CD8-positive, alpha-beta T cell (primary cell): ENCODE measurements at regions of chr20 and their contacts with region 1.

Region 1: DNA sequence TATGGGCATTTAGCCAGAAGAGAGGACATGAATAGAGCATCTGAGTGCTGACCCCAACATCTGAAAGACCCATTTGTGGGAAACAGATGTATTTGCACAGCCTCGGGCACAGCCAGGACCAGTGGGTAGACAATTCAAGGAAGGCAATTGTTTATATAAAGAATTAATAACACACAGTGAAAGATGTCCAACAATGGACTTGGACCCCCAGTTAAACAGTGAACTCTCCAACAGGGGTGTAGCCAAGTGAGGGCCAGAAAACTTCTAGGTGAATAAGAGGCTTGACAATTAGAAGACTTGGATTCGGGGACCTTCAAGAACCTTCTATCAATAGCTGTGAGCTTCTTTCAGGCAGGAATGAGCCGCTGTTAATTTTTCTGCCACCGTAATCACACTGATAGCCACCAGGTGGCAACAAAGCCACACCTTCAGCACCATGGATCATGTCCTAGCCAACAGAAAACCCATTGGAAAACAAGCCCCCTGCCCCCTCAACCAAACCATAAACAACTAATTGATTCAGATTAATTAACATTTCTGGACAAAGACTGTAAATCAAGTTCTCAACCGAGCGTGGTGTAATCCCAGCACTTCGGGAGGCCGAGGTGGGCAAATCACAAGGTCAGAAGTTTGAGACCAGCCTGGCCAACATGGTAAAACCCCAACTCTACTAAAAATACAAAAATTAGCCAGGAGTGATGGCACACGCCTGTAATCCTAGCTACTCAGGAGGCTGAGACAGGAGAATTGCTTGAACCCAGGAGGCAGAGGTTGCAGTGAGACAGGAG is 8.8 kb upstream of the SRSF6 start:
- DNase-seq: peak in 8 of 9 experiments; percentile 16 to 67 (median 46)
- ATAC-seq: peak; percentile 80
- H3K4me3 ChIP-seq: no peak overlapping the region
- H3K4me3 Mint-ChIP-seq: no peak overlapping the region
- H3K27ac ChIP-seq: no peak overlapping the region
- H3K27ac Mint-ChIP-seq: no peak overlapping the region
- H3K4me1 ChIP-seq: no peaks in the 10 kb centered on the region
- H3K4me1 Mint-ChIP-seq: peaks cover 4% of the 10 kb centered on the region
- H3K27me3 ChIP-seq: peaks cover 0 to 2% of the 10 kb centered on the region in 2 experiments
- H3K27me3 Mint-ChIP-seq: peaks cover 33% of the 10 kb centered on the region
- CTCF ChIP-seq: peak; percentile 69

Region 2: DNA sequence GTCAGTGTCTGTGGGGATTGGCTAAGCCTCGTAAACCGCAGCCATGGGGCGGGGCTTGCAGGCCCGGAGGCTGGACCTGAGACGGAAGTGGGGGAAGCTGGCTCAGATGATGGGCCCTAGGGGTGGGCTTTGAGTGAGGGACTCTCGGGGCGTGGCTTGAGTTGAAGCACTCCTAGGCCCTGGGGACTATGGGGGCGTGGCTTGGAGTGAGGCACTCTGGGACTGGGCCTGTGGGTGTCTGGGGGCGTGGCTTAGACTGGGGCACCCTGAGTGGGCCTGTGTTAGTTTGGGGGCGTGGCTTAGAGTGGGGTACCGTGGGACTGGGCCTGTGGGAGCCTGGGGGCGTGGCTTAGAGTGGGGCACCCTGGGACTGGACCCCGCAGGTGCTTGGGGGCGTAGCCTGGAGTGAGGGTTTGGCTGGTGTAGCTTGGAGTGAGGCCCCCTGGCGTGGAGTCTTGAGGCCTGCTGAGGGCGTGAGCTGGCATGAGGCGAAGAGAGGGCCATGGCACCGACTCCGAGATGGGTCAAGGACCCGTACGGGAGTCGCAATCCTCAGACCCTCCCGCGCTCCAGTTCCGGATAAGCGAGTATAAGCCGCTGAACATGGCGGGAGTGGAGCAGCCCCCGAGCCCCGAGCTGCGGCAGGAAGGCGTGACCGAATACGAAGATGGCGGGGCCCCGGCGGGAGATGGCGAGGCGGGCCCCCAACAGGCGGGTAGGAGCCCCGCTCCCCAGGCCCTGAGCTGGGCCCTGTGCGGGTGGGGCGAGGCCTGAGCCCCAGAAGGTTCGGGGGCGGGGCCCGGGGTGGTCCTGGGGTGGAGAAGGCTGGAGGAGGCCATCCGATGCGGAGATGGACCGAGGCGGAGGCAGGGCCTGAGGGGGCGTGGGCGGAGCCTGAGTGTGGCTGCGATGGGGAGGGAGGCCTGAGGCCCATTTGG is 65.4 kb after region 1 on chr20:
- CTCF ChIA-PET with region 1: interaction called, 6 read pairs
- POLR2A ChIA-PET with region 1: no interaction called
- intact Hi-C with region 1: loop called in 1 of 2 experiments (anchors 2 kb)
- DNase-seq: peak; percentile 74 to 97 (median 89)
- ATAC-seq: peak; percentile 92
- H3K4me3 ChIP-seq: peak overlapping the region; percentile 65 to 72
- H3K4me3 Mint-ChIP-seq: peak overlapping the region; percentile 90
- H3K27ac ChIP-seq: peak overlapping the region; percentile 33 to 50
- H3K27ac Mint-ChIP-seq: peak overlapping the region; percentile 86
- H3K4me1 ChIP-seq: peaks cover 12% of the 10 kb centered on the region
- H3K4me1 Mint-ChIP-seq: peaks cover 20% of the 10 kb centered on the region
- H3K27me3 ChIP-seq: no peaks in the 10 kb centered on the region
- H3K27me3 Mint-ChIP-seq: peaks cover 3% of the 10 kb centered on the region
- CTCF ChIP-seq: no peak

Region 3: GRCh38 chr20:43691928-43692524 is 243.1 kb after region 1 on chr20:
- CTCF ChIA-PET with region 1: interaction called, 19 read pairs
- POLR2A ChIA-PET with region 1: no interaction called
- intact Hi-C with region 1: loop called (anchors 2 kb)
- DNase-seq: peak; percentile 19 to 61 (median 54)
- ATAC-seq: peak; percentile 54
- H3K4me3 ChIP-seq: no peak overlapping the region
- H3K4me3 Mint-ChIP-seq: no peak overlapping the region
- H3K27ac ChIP-seq: no peak overlapping the region
- H3K27ac Mint-ChIP-seq: no peak overlapping the region
- H3K4me1 ChIP-seq: no peaks in the 10 kb centered on the region
- H3K4me1 Mint-ChIP-seq: peaks cover 3% of the 10 kb centered on the region
- H3K27me3 ChIP-seq: no peaks in the 10 kb centered on the region
- H3K27me3 Mint-ChIP-seq: no peaks in the 10 kb centered on the region
- CTCF ChIP-seq: peak; percentile 47

Region 4: GRCh38 chr20:44080646-44081267 is 631.8 kb after region 1 on chr20:
- CTCF ChIA-PET with region 1: interaction called, 3 read pairs
- POLR2A ChIA-PET with region 1: no interaction called
- intact Hi-C with region 1: loop called in 1 of 2 experiments (anchors 5 kb)
- DNase-seq: peak; percentile 61 to 88 (median 79)
- ATAC-seq: peak; percentile 99
- H3K4me3 ChIP-seq: no peak overlapping the region
- H3K4me3 Mint-ChIP-seq: no peak overlapping the region
- H3K27ac ChIP-seq: no peak overlapping the region
- H3K27ac Mint-ChIP-seq: peak overlapping the region; percentile 2
- H3K4me1 ChIP-seq: peaks cover 7% of the 10 kb centered on the region
- H3K4me1 Mint-ChIP-seq: peaks cover 21% of the 10 kb centered on the region
- H3K27me3 ChIP-seq: no peaks in the 10 kb centered on the region
- H3K27me3 Mint-ChIP-seq: no peaks in the 10 kb centered on the region
- CTCF ChIP-seq: peak; percentile 98

Region 5: DNA sequence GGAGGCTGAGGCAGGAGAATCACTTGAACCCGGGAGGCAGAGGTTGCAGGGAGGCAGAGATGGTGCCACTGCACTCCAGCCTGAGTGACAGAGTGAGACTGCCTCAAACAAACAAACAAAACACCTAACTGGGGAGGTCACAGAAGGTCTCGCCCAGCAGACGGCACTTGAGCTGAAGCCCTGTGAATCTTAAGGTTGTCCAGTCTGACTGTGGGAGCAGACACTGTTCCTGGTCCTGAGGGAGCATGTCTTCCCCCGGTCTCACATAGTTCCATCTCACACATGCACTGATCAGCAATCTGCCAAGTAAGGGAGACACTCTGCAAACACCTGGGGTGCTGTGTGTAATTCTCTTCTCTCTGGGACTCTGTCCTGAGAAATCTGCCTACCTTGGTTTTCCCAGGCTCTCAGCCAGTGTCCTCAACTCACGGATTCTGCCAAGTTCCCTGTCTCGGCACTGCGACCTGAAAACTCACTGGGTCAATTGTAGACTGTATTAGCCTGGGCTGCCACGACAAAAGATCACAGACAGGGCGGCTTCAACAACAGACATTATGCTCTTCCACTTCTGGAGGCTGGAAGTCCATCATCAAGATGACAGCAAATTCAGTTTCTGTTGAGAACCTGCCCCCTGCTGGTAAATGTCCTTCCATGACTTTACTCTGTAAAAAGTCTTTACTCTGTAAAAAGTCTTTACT is 643.8 kb after region 1 on chr20:
- CTCF ChIA-PET with region 1: no interaction called
- POLR2A ChIA-PET with region 1: no interaction called
- intact Hi-C with region 1: loop called in 1 of 2 experiments (anchors 5 kb)
- DNase-seq: peak in 4 of 9 experiments; percentile 32 to 55 (median 42)
- ATAC-seq: no peak
- H3K4me3 ChIP-seq: no peak overlapping the region
- H3K4me3 Mint-ChIP-seq: no peak overlapping the region
- H3K27ac ChIP-seq: no peak overlapping the region
- H3K27ac Mint-ChIP-seq: no peak overlapping the region
- H3K4me1 ChIP-seq: no peaks in the 10 kb centered on the region
- H3K4me1 Mint-ChIP-seq: no peaks in the 10 kb centered on the region
- H3K27me3 ChIP-seq: no peaks in the 10 kb centered on the region
- H3K27me3 Mint-ChIP-seq: peaks cover 17% of the 10 kb centered on the region
- CTCF ChIP-seq: peak; percentile 49

Region 6: GRCh38 chr20:44187051-44187762 is 738.3 kb after region 1 on chr20 and contains the start of gene JPH2:
- CTCF ChIA-PET with region 1: interaction called, 5 read pairs
- POLR2A ChIA-PET with region 1: no interaction called
- intact Hi-C with region 1: loop called in 1 of 2 experiments (anchors 1 kb)
- DNase-seq: no peak
- ATAC-seq: peak; percentile 11
- H3K4me3 ChIP-seq: peak within 1 kb of the TSS in 1 of 2 experiments; percentile 29
- H3K4me3 Mint-ChIP-seq: peak within 1 kb of the TSS; percentile 16
- H3K27ac ChIP-seq: no peak within 1 kb of the TSS
- H3K27ac Mint-ChIP-seq: no peak within 1 kb of the TSS
- H3K4me1 ChIP-seq: peaks cover 16% of the 10 kb centered on the region
- H3K4me1 Mint-ChIP-seq: peaks cover 9% of the 10 kb centered on the region
- H3K27me3 ChIP-seq: peaks cover 19 to 23% of the 10 kb centered on the region in 2 experiments
- H3K27me3 Mint-ChIP-seq: peaks cover 49% of the 10 kb centered on the region
- CTCF ChIP-seq: no peak
- total RNA-seq, gene JPH2: not detected